Heart left ventricle (tissue), 16 donors: ENCODE measurements at regions of chrX and their contacts with region 1.

Region 1: GRCh38 chrX:34778961-34779360 is 121.9 kb upstream of the TMEM47 start:
- DNase-seq: no peak
- ATAC-seq: no peak
- H3K4me3 ChIP-seq: no peak overlapping the region
- H3K27ac ChIP-seq: no peak overlapping the region
- H3K4me1 ChIP-seq: no peaks in the 10 kb centered on the region
- H3K27me3 ChIP-seq: no peaks in the 10 kb centered on the region
- CTCF ChIP-seq: no peak
- POLR2A ChIP-seq: no peak

Region 2: GRCh38 chrX:34839451-34839850 is 60.5 kb after region 1 on chrX:
- intact Hi-C with region 1: loop called in 1 of 10 experiments (anchors 10 kb)
- DNase-seq: no peak
- ATAC-seq: no peak
- H3K4me3 ChIP-seq: no peak overlapping the region
- H3K27ac ChIP-seq: no peak overlapping the region
- H3K4me1 ChIP-seq: no peaks in the 10 kb centered on the region
- H3K27me3 ChIP-seq: no peaks in the 10 kb centered on the region
- CTCF ChIP-seq: no peak
- POLR2A ChIP-seq: no peak